Transverse colon (tissue), 4 donors: ENCODE measurements at regions of chrX and their contacts with region 1.

Region 1: GRCh38 chrX:120365320-120365719 is 3.4 kb downstream of the ATP1B4 start:
- DNase-seq: peak; percentile 38
- H3K4me3 ChIP-seq: no peak overlapping the region
- H3K27ac ChIP-seq: no peak overlapping the region
- H3K4me1 ChIP-seq: no peaks in the 10 kb centered on the region
- H3K27me3 ChIP-seq: no peaks in the 10 kb centered on the region
- CTCF ChIP-seq: peak in 4 of 5 experiments; percentile 10 to 33 (median 22)
- EP300 ChIP-seq: no peak
- POLR2A ChIP-seq: no peak

Region 2: DNA sequence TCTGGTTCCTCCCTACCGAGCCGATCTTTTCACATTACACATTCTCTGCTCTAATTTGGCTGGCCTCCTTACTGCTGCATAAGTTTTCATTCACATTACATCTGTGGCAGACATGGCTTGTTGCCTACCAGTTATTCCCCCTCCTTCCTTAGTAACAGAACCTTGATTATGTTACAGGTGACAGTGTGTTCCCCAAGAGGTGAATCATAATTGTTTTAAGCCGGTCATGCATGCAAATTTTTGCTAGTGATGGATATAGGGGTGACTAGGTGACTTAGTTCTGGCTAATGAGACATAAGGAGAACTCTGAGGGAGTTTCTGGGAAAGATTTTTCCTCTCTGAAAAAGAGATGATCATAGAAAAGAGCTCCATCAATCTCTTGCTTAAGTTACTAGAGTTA is 112.1 kb after region 1 on chrX:
- in situ Hi-C with region 1: loop called in 2 of 4 experiments (anchors 10 kb)
- intact Hi-C with region 1: no loop called
- DNase-seq: no peak
- H3K4me3 ChIP-seq: no peak overlapping the region
- H3K27ac ChIP-seq: no peak overlapping the region
- H3K4me1 ChIP-seq: no peaks in the 10 kb centered on the region
- H3K27me3 ChIP-seq: no peaks in the 10 kb centered on the region
- CTCF ChIP-seq: no peak
- EP300 ChIP-seq: no peak
- POLR2A ChIP-seq: no peak

Region 3: GRCh38 chrX:120874678-120875557 is 509.6 kb after region 1 on chrX:
- in situ Hi-C with region 1: no loop called
- intact Hi-C with region 1: no loop called
- DNase-seq: no peak
- H3K4me3 ChIP-seq: no peak overlapping the region
- H3K27ac ChIP-seq: no peak overlapping the region
- H3K4me1 ChIP-seq: no peaks in the 10 kb centered on the region
- H3K27me3 ChIP-seq: no peaks in the 10 kb centered on the region
- CTCF ChIP-seq: no peak
- EP300 ChIP-seq: no peak
- POLR2A ChIP-seq: no peak